ENCODE measurements at regions of chr14 and their contacts with region 1.

Region 1: GRCh38 chr14:24108336-24108874 is 6.2 kb upstream of the DCAF11 start:
- DNase-seq: no peak
- ATAC-seq: no peak; the same call in 1 of the 2 replicates
- H3K4me3 Mint-ChIP-seq: no peak overlapping the region
- H3K27ac Mint-ChIP-seq: no peak overlapping the region
- H3K4me1 Mint-ChIP-seq: peaks cover 5% of the 10 kb centered on the region
- H3K27me3 Mint-ChIP-seq: no peaks in the 10 kb centered on the region; the same call in 1 of the 2 replicates
- CTCF ChIP-seq: no peak

Region 2: GRCh38 chr14:24067145-24068082 is 41.0 kb before region 1 on chr14:
- CTCF ChIA-PET with region 1: interaction called, 27 read pairs
- POLR2A ChIA-PET with region 1: interaction called, 3 read pairs
- DNase-seq: no peak
- ATAC-seq: no peak
- H3K4me3 Mint-ChIP-seq: no peak overlapping the region
- H3K27ac Mint-ChIP-seq: no peak overlapping the region
- H3K4me1 Mint-ChIP-seq: no peaks in the 10 kb centered on the region
- H3K27me3 Mint-ChIP-seq: no peaks in the 10 kb centered on the region
- CTCF ChIP-seq: no peak

Region 3: DNA sequence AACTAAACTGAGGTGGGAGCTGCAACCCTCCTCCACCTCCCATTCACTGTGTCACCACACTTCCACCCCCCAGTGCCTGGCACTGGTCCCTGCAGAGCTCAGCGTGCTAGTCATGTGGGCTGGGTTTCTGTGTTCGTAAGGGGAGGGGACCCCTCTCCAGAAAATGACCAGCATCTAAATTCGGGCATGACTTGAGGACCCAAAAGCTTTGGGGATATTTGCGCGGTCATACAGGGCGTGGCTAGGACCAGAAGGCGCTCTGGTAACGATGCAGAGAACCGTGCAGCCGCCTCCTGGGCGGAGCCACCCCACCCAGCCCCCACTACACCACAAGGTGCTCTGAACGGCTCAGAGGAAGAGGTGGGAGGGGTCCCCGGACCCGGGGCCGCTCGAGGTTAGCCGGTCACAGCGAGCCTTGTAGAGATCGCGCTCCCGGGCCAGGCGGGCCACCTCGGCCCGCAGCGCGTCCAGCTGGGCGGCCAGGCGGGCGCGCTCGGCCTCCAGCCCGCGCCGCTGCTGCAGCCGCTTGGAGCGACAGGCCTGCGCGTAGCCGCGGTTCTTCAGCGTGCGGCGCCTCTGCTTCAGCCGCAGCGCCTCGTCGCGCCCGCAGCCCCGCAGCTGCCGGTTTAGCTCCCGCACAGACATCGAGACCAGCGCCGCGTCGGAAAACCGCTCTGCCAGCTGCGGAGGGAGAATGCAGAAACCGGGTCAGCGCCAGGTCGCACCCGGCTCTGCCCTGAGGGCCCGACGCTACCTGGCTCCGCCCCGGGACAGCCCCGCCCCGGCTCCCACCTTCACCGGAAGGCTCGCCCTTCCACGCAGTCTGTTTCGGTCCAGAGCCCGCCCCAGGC is 27.3 kb before region 1 on chr14:
- CTCF ChIA-PET with region 1: interaction called, 42 read pairs
- POLR2A ChIA-PET with region 1: no interaction called
- DNase-seq: peak; percentile 69
- ATAC-seq: peak; percentile 76
- H3K4me3 Mint-ChIP-seq: peak overlapping the region; percentile 79
- H3K27ac Mint-ChIP-seq: peak overlapping the region; percentile 21
- H3K4me1 Mint-ChIP-seq: peaks cover 32% of the 10 kb centered on the region
- H3K27me3 Mint-ChIP-seq: peaks cover 26% of the 10 kb centered on the region
- CTCF ChIP-seq: no peak

Region 4: GRCh38 chr14:24135834-24136542 is 27.6 kb after region 1 on chr14 and contains the start of gene PSME1:
- CTCF ChIA-PET with region 1: interaction called, 26 read pairs
- POLR2A ChIA-PET with region 1: interaction called, 24 read pairs
- DNase-seq: peak; percentile 93
- ATAC-seq: peak; percentile 92
- H3K4me3 Mint-ChIP-seq: peak within 1 kb of the TSS; percentile 86
- H3K27ac Mint-ChIP-seq: peak within 1 kb of the TSS; percentile 88
- H3K4me1 Mint-ChIP-seq: peaks cover 33% of the 10 kb centered on the region
- H3K27me3 Mint-ChIP-seq: no peaks in the 10 kb centered on the region; the same call in 1 of the 2 replicates
- CTCF ChIP-seq: no peak
- total RNA-seq, gene PSME1: 76.8 to 99.1 TPM (median 98.8 TPM) in 3 replicates